Natural killer cell (primary cell): ENCODE measurements at regions of chr9 and their contacts with region 1.

Region 1: DNA sequence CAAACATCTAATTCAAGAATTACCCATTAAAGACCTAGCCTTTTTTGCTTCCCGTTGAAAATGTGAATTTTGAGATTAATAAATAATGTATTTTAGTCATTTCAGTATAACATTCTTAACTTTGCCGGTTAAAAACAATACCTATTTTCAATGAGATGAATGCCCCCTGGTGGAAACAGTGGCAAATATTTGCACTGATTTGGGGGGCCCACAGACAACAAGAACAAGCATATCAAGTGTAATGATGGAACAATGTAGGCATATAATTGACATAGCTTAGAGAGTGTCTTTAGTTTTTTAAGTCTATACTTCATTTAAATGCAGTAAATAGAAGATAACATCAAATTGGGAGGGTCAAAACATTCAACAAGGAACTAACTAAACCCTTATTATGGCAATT is 111.9 kb downstream of the NTRK2 start:
- DNase-seq: peak in 1 of 2 donors; percentile 21
- ATAC-seq: no peak
- H3K4me3 ChIP-seq: no peak overlapping the region
- H3K4me3 Mint-ChIP-seq: no peak overlapping the region
- H3K27ac ChIP-seq: no peak overlapping the region
- H3K27ac Mint-ChIP-seq: no peak overlapping the region
- H3K4me1 ChIP-seq: no peaks in the 10 kb centered on the region
- H3K4me1 Mint-ChIP-seq: no peaks in the 10 kb centered on the region
- H3K27me3 ChIP-seq: no peaks in the 10 kb centered on the region
- H3K27me3 Mint-ChIP-seq: peaks cover 30 to 62% of the 10 kb centered on the region in 2 donors
- CTCF ChIP-seq: no peak

Region 2: GRCh38 chr9:84371737-84372136 is 409.7 kb before region 1 on chr9:
- intact Hi-C with region 1: no loop called
- DNase-seq: peak; percentile 7 to 19
- ATAC-seq: peak; percentile 84 to 89 (median 89)
- H3K4me3 ChIP-seq: no peak overlapping the region
- H3K4me3 Mint-ChIP-seq: peak overlapping the region; percentile 64
- H3K27ac ChIP-seq: peak overlapping the region; percentile 78
- H3K27ac Mint-ChIP-seq: peak overlapping the region; percentile 81 to 89
- H3K4me1 ChIP-seq: peaks cover 43% of the 10 kb centered on the region
- H3K4me1 Mint-ChIP-seq: peaks cover 66 to 88% of the 10 kb centered on the region in 2 donors
- H3K27me3 ChIP-seq: no peaks in the 10 kb centered on the region
- H3K27me3 Mint-ChIP-seq: no peaks in the 10 kb centered on the region
- CTCF ChIP-seq: no peak

Region 3: GRCh38 chr9:84404095-84404686 is 377.3 kb before region 1 on chr9:
- intact Hi-C with region 1: loop called (anchors 2 kb)
- DNase-seq: peak in 1 of 2 donors; percentile 11
- ATAC-seq: peak in 2 of 3 donors; percentile 63 to 70
- H3K4me3 ChIP-seq: no peak overlapping the region
- H3K4me3 Mint-ChIP-seq: no peak overlapping the region
- H3K27ac ChIP-seq: no peak overlapping the region
- H3K27ac Mint-ChIP-seq: no peak overlapping the region
- H3K4me1 ChIP-seq: peaks cover 3% of the 10 kb centered on the region
- H3K4me1 Mint-ChIP-seq: peaks cover 4 to 5% of the 10 kb centered on the region in 2 donors
- H3K27me3 ChIP-seq: no peaks in the 10 kb centered on the region
- H3K27me3 Mint-ChIP-seq: no peaks in the 10 kb centered on the region
- CTCF ChIP-seq: peak; percentile 70

Region 4: DNA sequence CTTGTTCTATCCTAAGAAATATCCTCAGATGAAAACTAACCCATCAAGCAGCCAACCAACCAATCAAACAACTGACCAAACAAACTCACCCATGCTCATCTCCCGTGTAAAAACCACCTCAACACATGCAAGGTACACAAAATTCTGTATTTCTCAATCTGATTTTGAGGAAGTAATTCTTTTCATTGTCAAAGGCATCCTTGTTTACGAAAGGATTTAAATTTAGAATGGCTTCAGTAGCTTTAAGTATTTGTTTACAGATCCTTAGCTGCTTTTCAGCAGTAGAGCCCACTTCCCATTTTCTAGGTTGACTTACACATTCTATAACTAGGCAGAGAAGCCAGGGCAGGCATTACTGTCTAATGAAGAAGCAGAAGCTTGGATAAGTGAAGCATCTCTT is 33.3 kb before region 1 on chr9:
- intact Hi-C with region 1: no loop called
- DNase-seq: no peak
- ATAC-seq: no peak
- H3K4me3 ChIP-seq: no peak overlapping the region
- H3K4me3 Mint-ChIP-seq: no peak overlapping the region
- H3K27ac ChIP-seq: no peak overlapping the region
- H3K27ac Mint-ChIP-seq: no peak overlapping the region
- H3K4me1 ChIP-seq: no peaks in the 10 kb centered on the region
- H3K4me1 Mint-ChIP-seq: no peaks in the 10 kb centered on the region
- H3K27me3 ChIP-seq: no peaks in the 10 kb centered on the region
- H3K27me3 Mint-ChIP-seq: peaks cover 0 to 6% of the 10 kb centered on the region in 2 donors
- CTCF ChIP-seq: no peak